Activated CD4-positive, alpha-beta memory T cell treated with anti-CD3 and anti-CD28 coated beads for 36 hours (primary cell): ENCODE measurements at regions of chr19 and their contacts with region 1.

Region 1: GRCh38 chr19:17305517-17306284 is at the start of gene MRPL34:
- DNase-seq: peak; percentile 99
- H3K4me3 Mint-ChIP-seq: peak within 1 kb of the TSS; percentile 89
- H3K27ac Mint-ChIP-seq: peak within 1 kb of the TSS; percentile 89
- H3K4me1 Mint-ChIP-seq: peaks cover 54% of the 10 kb centered on the region
- H3K27me3 Mint-ChIP-seq: no peaks in the 10 kb centered on the region
- total RNA-seq, gene MRPL34: 92.9 to 93.7 TPM

Region 2: DNA sequence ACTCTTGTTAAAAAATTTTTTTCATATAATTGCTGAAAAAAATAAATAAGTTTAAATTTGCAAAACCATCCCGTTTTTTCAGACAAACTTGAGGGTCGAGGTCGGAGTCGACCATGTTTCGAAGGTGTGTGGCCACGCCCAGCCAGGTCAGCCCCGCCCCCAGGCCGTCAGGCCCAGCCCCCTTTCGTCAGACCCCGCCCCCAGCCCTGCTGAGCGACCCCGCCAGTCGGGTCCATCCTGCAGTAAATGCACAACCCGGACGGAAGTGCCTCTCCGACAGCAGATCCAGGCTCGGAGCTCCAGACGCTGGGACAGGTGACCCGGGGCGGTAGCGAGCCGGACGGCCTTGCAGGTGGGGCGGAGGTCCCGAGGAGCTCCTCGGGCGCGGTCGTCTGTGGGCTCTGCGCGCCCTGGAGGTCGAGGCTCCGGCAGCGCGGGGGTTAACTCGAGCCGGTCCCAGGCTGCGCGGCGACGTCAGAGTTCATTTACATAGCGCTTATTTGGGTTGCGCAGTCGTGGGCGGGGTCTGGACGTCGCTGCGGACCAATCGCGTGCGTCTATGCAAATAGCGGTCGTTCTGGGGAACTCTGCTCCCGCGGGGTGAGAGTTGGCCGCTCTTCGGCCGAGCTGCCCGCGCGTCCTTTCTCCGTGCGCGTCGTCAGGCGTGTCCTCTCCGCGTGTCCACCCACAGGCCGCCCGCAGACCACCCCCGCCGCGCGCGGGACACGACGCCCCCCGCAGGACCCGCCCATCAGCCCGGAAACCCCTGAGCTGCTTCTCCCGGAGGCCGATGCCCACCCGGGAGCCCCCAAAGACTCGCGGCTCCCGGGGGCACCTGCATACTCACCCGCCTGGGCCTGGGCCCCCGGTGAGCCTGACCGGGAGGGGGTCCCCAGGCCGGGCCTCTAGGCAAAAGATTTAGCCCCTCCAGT is 79.4 kb before region 1 on chr19 and contains the start of gene OCEL1:
- CTCF ChIA-PET with region 1: no interaction called
- POLR2A ChIA-PET with region 1: no interaction called
- intact Hi-C with region 1: loop called (anchors 5 kb)
- DNase-seq: peak; percentile 98
- H3K4me3 Mint-ChIP-seq: peak within 1 kb of the TSS; percentile 91
- H3K27ac Mint-ChIP-seq: peak within 1 kb of the TSS; percentile 97
- H3K4me1 Mint-ChIP-seq: peaks cover 6% of the 10 kb centered on the region
- H3K27me3 Mint-ChIP-seq: no peaks in the 10 kb centered on the region
- total RNA-seq, gene OCEL1: 17.6 to 17.9 TPM

Region 3: GRCh38 chr19:17266975-17267788 is 38.5 kb before region 1 on chr19 and contains the start of gene BABAM1:
- CTCF ChIA-PET with region 1: interaction called, 5 read pairs
- POLR2A ChIA-PET with region 1: interaction called, 4 read pairs
- intact Hi-C with region 1: loop called (anchors 1 kb)
- DNase-seq: peak; percentile 97
- H3K4me3 Mint-ChIP-seq: peak within 1 kb of the TSS; percentile 90
- H3K27ac Mint-ChIP-seq: peak within 1 kb of the TSS; percentile 91
- H3K4me1 Mint-ChIP-seq: peaks cover 21% of the 10 kb centered on the region
- H3K27me3 Mint-ChIP-seq: peaks cover 2% of the 10 kb centered on the region
- total RNA-seq, gene BABAM1: 110 TPM

Region 4: GRCh38 chr19:17292286-17293097 is 13.2 kb before region 1 on chr19:
- CTCF ChIA-PET with region 1: interaction called, 20 read pairs
- POLR2A ChIA-PET with region 1: interaction called, 3 read pairs
- intact Hi-C with region 1: no loop called
- DNase-seq: peak; percentile 86
- H3K4me3 Mint-ChIP-seq: peak overlapping the region; percentile 86
- H3K27ac Mint-ChIP-seq: peak overlapping the region; percentile 28
- H3K4me1 Mint-ChIP-seq: peaks cover 9% of the 10 kb centered on the region
- H3K27me3 Mint-ChIP-seq: peaks cover 3% of the 10 kb centered on the region

Region 5: DNA sequence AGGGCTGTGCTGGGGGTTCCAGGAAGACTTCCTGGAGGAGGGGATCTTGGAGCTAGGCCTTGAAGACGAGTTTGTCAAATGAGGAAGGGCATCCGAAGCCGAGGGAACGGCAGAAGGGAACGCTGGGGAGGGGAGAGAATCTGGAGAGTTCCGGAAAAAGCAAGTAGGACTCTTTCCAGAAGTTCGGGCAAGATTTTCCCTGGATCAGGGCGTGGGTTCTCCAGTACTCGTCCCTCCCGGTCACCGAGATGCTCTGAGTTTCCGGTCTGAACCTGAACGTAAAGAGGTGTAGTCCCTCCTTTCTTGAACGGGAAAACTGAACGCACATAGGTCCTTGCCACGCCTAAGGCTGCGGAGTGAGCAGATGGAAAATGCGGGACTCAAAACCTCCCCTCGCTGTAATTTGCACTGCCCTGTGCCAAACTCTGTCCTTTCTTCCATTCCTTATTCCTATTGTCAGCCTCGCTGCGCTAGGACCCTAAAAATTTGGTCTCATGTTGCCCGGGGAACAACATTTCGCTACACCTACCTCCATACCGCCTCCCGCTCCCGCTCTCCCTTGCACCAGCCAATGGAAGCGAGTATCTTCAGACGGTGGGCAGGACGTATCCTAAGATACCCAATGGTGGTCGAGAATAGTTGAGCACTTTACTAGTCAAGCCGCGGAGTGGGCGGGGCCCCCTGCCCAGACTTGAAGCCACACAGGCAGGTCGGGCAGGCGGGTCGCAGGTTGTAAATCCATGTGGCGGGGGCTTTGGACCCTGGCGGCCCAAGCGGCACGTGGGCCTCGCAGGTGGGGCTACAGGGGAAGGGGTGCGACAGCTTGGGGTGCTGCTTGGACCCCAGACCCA is 31.4 kb after region 1 on chr19 and contains the start of gene GTPBP3:
- CTCF ChIA-PET with region 1: interaction called, 11 read pairs
- POLR2A ChIA-PET with region 1: interaction called, 15 read pairs
- intact Hi-C with region 1: loop called (anchors 1 kb)
- DNase-seq: peak; percentile 98
- H3K4me3 Mint-ChIP-seq: peak within 1 kb of the TSS; percentile 93
- H3K27ac Mint-ChIP-seq: peak within 1 kb of the TSS; percentile 93
- H3K4me1 Mint-ChIP-seq: peaks cover 28% of the 10 kb centered on the region
- H3K27me3 Mint-ChIP-seq: no peaks in the 10 kb centered on the region
- total RNA-seq, gene GTPBP3: 37.7 to 41.4 TPM

Region 6: GRCh38 chr19:17405250-17406038 is 99.7 kb after region 1 on chr19 and contains the start of gene BST2:
- CTCF ChIA-PET with region 1: no interaction called
- POLR2A ChIA-PET with region 1: no interaction called
- intact Hi-C with region 1: loop called (anchors 5 kb)
- DNase-seq: peak; percentile 71
- H3K4me3 Mint-ChIP-seq: peak within 1 kb of the TSS; percentile 93
- H3K27ac Mint-ChIP-seq: peak within 1 kb of the TSS; percentile 97
- H3K4me1 Mint-ChIP-seq: peaks cover 26% of the 10 kb centered on the region
- H3K27me3 Mint-ChIP-seq: no peaks in the 10 kb centered on the region
- total RNA-seq, gene BST2: 156 to 164 TPM

Region 7: GRCh38 chr19:17511724-17512573 is 206.2 kb after region 1 on chr19:
- CTCF ChIA-PET with region 1: no interaction called
- POLR2A ChIA-PET with region 1: no interaction called
- intact Hi-C with region 1: loop called (anchors 5 kb)
- DNase-seq: peak; percentile 90
- H3K4me3 Mint-ChIP-seq: peak overlapping the region; percentile 96
- H3K27ac Mint-ChIP-seq: peak overlapping the region; percentile 80
- H3K4me1 Mint-ChIP-seq: peaks cover 38% of the 10 kb centered on the region
- H3K27me3 Mint-ChIP-seq: no peaks in the 10 kb centered on the region